Activated CD4-positive, alpha-beta memory T cell treated with anti-CD3 and anti-CD28 coated beads, Interleukin-2, amount 10 ng/mL, durations not matched to agents 7 days and 5 days (primary cell): ENCODE measurements at regions of chr3 and their contacts with region 1.

Region 1: GRCh38 chr3:58008140-58009025 is at the start of gene FLNB:
- DNase-seq: peak; percentile 81
- H3K4me3 Mint-ChIP-seq: peak within 1 kb of the TSS; percentile 86
- H3K27ac Mint-ChIP-seq: peak within 1 kb of the TSS; percentile 73
- H3K4me1 Mint-ChIP-seq: peaks cover 41% of the 10 kb centered on the region
- H3K27me3 Mint-ChIP-seq: no peaks in the 10 kb centered on the region
- total RNA-seq, gene FLNB: 33.3 to 37.9 TPM

Region 2: DNA sequence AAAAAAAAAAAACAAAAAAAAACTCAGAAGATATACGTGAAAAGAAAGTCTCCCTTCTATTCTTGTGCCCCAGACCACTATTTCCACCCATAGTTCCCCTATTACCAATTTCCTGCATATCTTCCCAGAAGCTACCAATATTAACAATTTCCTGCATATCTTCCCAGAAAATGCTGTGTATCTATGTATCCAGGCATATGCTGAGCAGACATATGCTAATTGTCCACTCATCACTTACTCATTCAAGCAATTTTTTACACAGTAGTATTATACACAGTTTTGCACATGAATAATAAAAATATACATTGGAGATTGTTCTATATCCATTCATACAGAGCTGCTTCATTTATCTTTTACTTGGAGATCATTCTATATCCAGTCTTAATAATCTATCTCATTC is 264.9 kb before region 1 on chr3:
- CTCF ChIA-PET with region 1: no interaction called
- POLR2A ChIA-PET with region 1: no interaction called
- DNase-seq: no peak
- H3K4me3 Mint-ChIP-seq: no peak overlapping the region
- H3K27ac Mint-ChIP-seq: no peak overlapping the region
- H3K4me1 Mint-ChIP-seq: no peaks in the 10 kb centered on the region
- H3K27me3 Mint-ChIP-seq: no peaks in the 10 kb centered on the region

Region 3: DNA sequence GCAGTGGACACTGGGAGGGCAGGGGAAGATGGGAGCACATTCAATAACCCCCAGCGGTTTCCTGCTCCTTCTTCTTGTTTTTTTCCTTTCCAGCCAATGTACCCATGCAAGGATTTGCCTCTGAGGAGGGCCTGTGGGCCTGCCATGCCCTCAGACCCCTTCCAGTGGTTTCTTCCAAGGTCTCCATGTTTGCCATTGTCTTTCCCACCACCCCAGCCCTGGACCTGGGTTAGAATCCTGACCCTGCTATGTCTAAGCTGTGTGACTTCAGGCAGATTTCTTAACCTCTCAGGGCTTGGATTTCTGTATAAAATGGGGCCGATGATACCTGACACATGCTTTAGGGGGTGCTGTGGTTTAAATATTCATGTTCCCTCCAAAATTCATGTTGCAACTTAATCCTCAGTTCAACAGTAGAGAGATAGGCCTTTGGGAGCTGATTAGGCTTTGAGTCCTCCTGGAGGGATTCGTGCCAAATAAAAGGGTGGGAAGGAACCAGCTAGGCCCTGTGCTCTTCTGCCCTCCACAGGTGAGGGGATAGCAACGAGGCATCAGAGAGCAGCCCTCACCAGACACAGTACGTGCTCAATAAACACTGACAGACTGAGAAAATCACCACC is 46.4 kb before region 1 on chr3:
- CTCF ChIA-PET with region 1: interaction called, 10 read pairs
- POLR2A ChIA-PET with region 1: interaction called, 6 read pairs
- DNase-seq: no peak
- H3K4me3 Mint-ChIP-seq: no peak overlapping the region
- H3K27ac Mint-ChIP-seq: no peak overlapping the region
- H3K4me1 Mint-ChIP-seq: peaks cover 11% of the 10 kb centered on the region
- H3K27me3 Mint-ChIP-seq: no peaks in the 10 kb centered on the region

Region 4: DNA sequence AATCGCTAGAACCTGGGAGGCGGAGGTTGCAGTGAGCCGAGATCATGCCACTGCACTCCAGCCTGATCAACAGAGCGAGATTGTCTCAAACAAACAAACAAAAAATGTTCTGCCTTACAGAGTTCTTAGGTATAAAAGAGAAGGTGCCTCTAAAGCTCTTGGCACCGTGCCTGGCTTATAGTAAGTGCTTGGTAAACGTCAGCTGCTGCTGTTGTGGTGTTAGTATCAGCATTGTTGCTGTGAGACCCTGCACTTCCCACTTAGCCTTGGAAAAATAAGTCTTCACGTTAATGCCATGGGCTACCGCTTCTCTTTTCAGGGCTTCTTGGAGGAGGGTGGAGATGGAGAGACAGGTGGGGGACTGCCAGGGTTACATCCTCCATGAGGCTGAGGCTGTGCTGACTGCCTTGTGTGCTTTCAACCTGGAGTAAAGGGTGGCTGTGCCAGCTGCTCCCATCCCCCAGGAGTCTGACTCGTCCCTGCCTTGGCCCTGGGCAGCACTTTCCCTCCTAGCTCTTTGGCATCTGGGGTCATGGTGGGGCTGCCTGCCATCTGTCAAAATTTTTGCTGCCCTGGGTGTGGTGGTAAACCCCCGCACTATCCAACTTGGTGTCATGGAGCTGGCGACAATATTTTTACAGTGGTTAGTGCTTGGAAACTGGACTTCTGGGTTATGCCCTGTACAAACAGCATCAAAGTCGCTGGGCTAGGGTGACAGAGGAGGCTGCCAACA is 17.6 kb after region 1 on chr3:
- CTCF ChIA-PET with region 1: interaction called, 25 read pairs
- POLR2A ChIA-PET with region 1: interaction called, 15 read pairs
- DNase-seq: no peak
- H3K4me3 Mint-ChIP-seq: no peak overlapping the region
- H3K27ac Mint-ChIP-seq: no peak overlapping the region
- H3K4me1 Mint-ChIP-seq: peaks cover 62% of the 10 kb centered on the region
- H3K27me3 Mint-ChIP-seq: no peaks in the 10 kb centered on the region

Region 5: GRCh38 chr3:58143426-58144055 is 135.2 kb after region 1 on chr3:
- CTCF ChIA-PET with region 1: no interaction called
- POLR2A ChIA-PET with region 1: no interaction called
- DNase-seq: no peak
- H3K4me3 Mint-ChIP-seq: no peak overlapping the region
- H3K27ac Mint-ChIP-seq: no peak overlapping the region
- H3K4me1 Mint-ChIP-seq: no peaks in the 10 kb centered on the region
- H3K27me3 Mint-ChIP-seq: no peaks in the 10 kb centered on the region

Region 6: DNA sequence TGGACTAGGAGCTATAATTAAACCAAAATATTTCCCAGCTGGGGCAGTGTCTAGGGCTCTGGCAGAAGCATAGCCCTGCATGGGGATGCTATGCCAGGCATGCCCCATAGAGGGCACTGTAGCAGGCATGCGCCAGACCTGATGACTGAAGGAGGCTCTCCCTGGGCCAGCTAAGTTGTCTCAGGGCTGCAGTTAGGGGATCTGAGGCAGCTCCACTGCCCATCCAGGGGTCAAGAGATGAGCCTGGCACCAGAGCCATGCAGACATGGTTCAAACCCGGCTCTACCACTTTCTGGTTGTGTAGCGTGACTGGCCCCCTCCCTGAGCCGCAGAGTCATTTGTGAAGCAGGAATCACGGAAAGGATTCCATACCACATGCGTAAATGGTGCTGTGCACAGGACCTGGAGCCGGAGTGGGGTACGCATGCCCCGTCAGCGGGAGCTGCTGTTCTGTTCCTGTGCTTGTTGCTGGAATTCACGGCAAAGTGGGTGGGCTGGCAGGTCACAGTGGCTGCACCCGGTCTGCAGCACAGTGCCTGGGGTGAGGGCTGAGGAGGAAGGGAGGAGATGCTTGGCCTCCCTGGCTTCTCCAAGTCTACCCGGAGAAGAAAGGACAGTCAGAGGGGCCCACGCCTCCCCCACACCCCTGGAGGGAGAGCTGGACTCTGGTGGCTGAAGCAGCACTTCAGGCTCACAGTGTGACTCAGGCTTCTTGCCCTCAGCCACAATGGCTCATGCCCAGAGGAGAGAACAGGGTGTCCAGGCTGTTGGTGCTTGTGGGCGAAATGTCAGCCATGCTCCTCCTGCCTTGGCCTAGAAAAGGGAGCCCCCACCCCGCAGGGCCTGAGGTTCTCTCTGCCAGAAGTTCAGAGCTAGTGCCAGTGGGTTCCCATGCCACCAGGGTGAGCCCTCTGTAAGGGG is 159.3 kb after region 1 on chr3:
- CTCF ChIA-PET with region 1: interaction called, 11 read pairs
- POLR2A ChIA-PET with region 1: no interaction called
- DNase-seq: peak; percentile 66
- H3K4me3 Mint-ChIP-seq: no peak overlapping the region
- H3K27ac Mint-ChIP-seq: no peak overlapping the region
- H3K4me1 Mint-ChIP-seq: no peaks in the 10 kb centered on the region
- H3K27me3 Mint-ChIP-seq: no peaks in the 10 kb centered on the region

Region 7: GRCh38 chr3:58217209-58217811 is 208.9 kb after region 1 on chr3:
- CTCF ChIA-PET with region 1: interaction called, 17 read pairs
- POLR2A ChIA-PET with region 1: no interaction called
- DNase-seq: peak; percentile 63
- H3K4me3 Mint-ChIP-seq: no peak overlapping the region
- H3K27ac Mint-ChIP-seq: no peak overlapping the region
- H3K4me1 Mint-ChIP-seq: peaks cover 28% of the 10 kb centered on the region
- H3K27me3 Mint-ChIP-seq: peaks cover 5% of the 10 kb centered on the region